ENCODE measurements at regions of chr6 and their contacts with region 1.

Region 1: GRCh38 chr6:32529697-32530429 is at the start of gene HLA-DRB5:
- H3K4me3 Mint-ChIP-seq: peak within 1 kb of the TSS; percentile 80
- H3K27ac Mint-ChIP-seq: peak within 1 kb of the TSS; percentile 96
- H3K4me1 Mint-ChIP-seq: peaks cover 23% of the 10 kb centered on the region
- H3K27me3 Mint-ChIP-seq: no peaks in the 10 kb centered on the region

Region 2: DNA sequence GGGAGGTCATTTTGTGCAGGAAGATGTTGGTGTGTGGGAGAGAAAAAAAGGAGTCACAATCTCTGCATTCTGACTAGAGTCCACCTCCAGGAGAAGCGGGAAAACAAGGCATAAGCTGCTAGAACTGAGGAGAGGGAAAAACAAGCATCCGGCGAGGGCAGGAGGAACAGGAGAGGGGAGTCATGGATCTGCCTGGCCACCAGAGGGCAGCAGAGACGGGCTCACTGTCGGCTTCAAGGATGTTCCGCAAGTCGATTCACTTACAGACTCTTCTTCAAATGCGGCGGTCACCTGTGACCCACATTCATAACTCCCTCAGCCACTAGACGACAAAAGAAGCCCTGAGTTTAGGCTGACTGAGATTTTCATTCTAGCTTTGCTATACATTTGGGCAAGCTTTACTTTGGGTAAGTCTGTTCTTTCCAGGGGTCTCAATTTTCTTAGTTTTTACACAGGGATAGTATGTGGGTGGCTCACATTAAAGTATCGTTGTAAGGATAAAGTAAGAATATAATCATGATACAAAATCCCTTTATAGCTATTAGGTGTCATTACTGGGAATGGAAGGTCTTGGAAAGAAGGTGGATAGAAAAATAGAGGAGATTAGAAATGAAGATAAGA is 116.3 kb before region 1 on chr6:
- intact Hi-C with region 1: no loop called
- H3K4me3 Mint-ChIP-seq: no peak overlapping the region
- H3K27ac Mint-ChIP-seq: no peak overlapping the region
- H3K4me1 Mint-ChIP-seq: peaks cover 22% of the 10 kb centered on the region
- H3K27me3 Mint-ChIP-seq: peaks cover 44% of the 10 kb centered on the region

Region 3: DNA sequence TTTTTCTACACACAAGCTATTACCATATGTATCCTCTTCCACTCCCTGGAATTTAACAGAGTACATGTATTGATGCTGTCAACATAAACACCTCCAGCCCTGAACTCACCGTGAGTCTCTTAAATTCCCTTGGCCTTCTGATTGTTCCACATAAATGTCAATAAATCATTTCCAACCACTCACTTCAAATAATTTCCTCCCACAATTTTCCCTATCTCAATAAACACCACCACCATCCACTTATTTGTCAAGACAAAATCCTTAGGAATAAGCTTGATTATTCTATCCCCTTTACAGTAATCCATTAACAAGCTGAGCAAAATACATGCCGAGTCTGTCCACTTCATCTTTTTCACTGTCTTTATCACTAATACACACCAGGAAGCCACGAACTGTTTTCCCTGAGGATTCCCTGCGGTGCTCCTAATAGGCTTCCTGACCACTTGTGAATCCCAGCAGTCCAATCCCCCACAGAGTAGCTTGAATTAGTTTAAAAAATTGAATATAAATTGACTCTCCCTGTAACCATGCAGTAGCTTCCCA is 40.6 kb after region 1 on chr6:
- intact Hi-C with region 1: loop called (anchors 5 kb)
- H3K4me3 Mint-ChIP-seq: no peak overlapping the region
- H3K27ac Mint-ChIP-seq: peak overlapping the region; percentile 50
- H3K4me1 Mint-ChIP-seq: peaks cover 32% of the 10 kb centered on the region
- H3K27me3 Mint-ChIP-seq: peaks cover 1% of the 10 kb centered on the region

Region 4: GRCh38 chr6:32954983-32955802 is 425.3 kb after region 1 on chr6:
- intact Hi-C with region 1: no loop called
- H3K4me3 Mint-ChIP-seq: no peak overlapping the region
- H3K27ac Mint-ChIP-seq: peak overlapping the region; percentile 30
- H3K4me1 Mint-ChIP-seq: peaks cover 55% of the 10 kb centered on the region
- H3K27me3 Mint-ChIP-seq: no peaks in the 10 kb centered on the region